ENCODE measurements at regions of chr1 and their contacts with region 1.

Region 1: GRCh38 chr1:59076612-59077011 is 220.3 kb upstream of the FGGY start:
- DNase-seq: no peak
- ATAC-seq: no peak
- H3K4me3 ChIP-seq: no peak overlapping the region
- H3K4me3 Mint-ChIP-seq: no peak overlapping the region
- H3K27ac ChIP-seq: no peak overlapping the region
- H3K27ac Mint-ChIP-seq: no peak overlapping the region
- H3K4me1 ChIP-seq: peaks cover 13% of the 10 kb centered on the region
- H3K4me1 Mint-ChIP-seq: peaks cover 11% of the 10 kb centered on the region
- H3K27me3 ChIP-seq: no peaks in the 10 kb centered on the region
- H3K27me3 Mint-ChIP-seq: no peaks in the 10 kb centered on the region
- CTCF ChIP-seq: peak; percentile 14

Region 2: GRCh38 chr1:58739856-58740466 is 336.7 kb before region 1 on chr1:
- CTCF ChIA-PET with region 1: no interaction called
- POLR2A ChIA-PET with region 1: no interaction called
- intact Hi-C with region 1: loop called in 1 of 2 experiments (anchors 1 kb)
- DNase-seq: peak in 4 of 14 experiments; percentile 42 to 78 (median 75)
- ATAC-seq: no peak
- H3K4me3 ChIP-seq: no peak overlapping the region
- H3K4me3 Mint-ChIP-seq: no peak overlapping the region
- H3K27ac ChIP-seq: no peak overlapping the region
- H3K27ac Mint-ChIP-seq: no peak overlapping the region
- H3K4me1 ChIP-seq: no peaks in the 10 kb centered on the region
- H3K4me1 Mint-ChIP-seq: no peaks in the 10 kb centered on the region
- H3K27me3 ChIP-seq: no peaks in the 10 kb centered on the region
- H3K27me3 Mint-ChIP-seq: no peaks in the 10 kb centered on the region
- CTCF ChIP-seq: peak; percentile 94

Region 3: DNA sequence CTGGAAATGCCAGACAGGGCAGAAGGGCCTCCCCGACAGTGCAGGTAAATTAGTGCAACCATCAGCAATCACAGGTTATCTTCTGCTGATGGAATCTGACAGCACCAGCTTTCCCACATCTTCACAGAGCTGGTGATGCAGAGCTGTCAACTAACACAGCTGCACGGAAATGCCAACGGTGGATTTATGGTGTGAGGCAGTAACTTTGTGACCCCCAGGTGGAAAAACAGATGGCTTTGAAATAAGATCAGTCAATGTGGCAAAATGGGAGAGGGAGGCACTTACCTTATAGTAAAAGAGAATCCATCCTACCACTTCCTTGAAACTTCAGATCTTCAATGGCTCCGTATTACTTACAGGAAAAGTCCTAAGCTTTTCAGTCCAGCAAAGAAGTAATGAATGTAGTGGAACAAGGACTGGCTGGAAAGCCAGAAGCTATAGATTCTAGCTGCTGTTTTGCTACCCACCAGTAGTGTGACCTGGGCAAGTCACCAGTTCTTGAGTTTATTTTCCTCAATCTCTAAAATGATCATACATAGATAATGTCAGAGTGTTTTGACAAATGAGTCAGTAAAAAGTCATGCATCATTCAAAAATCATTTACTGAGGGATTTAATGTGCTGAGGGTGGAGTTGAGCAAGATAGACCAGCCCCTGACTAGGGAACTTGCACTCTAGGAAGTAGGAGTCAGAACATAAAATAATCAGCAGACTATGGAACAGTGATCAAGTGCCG is 47.0 kb before region 1 on chr1:
- CTCF ChIA-PET with region 1: no interaction called
- POLR2A ChIA-PET with region 1: no interaction called
- intact Hi-C with region 1: no loop called
- DNase-seq: no peak
- ATAC-seq: no peak
- H3K4me3 ChIP-seq: no peak overlapping the region
- H3K4me3 Mint-ChIP-seq: no peak overlapping the region
- H3K27ac ChIP-seq: no peak overlapping the region
- H3K27ac Mint-ChIP-seq: no peak overlapping the region
- H3K4me1 ChIP-seq: no peaks in the 10 kb centered on the region
- H3K4me1 Mint-ChIP-seq: no peaks in the 10 kb centered on the region
- H3K27me3 ChIP-seq: peaks cover 0 to 2% of the 10 kb centered on the region in 2 experiments
- H3K27me3 Mint-ChIP-seq: no peaks in the 10 kb centered on the region
- CTCF ChIP-seq: no peak

Region 4: GRCh38 chr1:59146651-59147358 is 70.2 kb after region 1 on chr1:
- CTCF ChIA-PET with region 1: no interaction called
- POLR2A ChIA-PET with region 1: no interaction called
- intact Hi-C with region 1: no loop called
- DNase-seq: peak; percentile 7 to 72 (median 24)
- ATAC-seq: peak; percentile 48
- H3K4me3 ChIP-seq: peak overlapping the region; percentile 62
- H3K4me3 Mint-ChIP-seq: peak overlapping the region; percentile 77
- H3K27ac ChIP-seq: no peak overlapping the region
- H3K27ac Mint-ChIP-seq: no peak overlapping the region
- H3K4me1 ChIP-seq: peaks cover 14% of the 10 kb centered on the region
- H3K4me1 Mint-ChIP-seq: peaks cover 12% of the 10 kb centered on the region
- H3K27me3 ChIP-seq: no peaks in the 10 kb centered on the region
- H3K27me3 Mint-ChIP-seq: peaks cover 13% of the 10 kb centered on the region
- CTCF ChIP-seq: no peak

Region 5: GRCh38 chr1:59173721-59174120 is 97.1 kb after region 1 on chr1:
- CTCF ChIA-PET with region 1: no interaction called
- POLR2A ChIA-PET with region 1: no interaction called
- intact Hi-C with region 1: no loop called
- DNase-seq: peak in 1 of 14 experiments; percentile 11
- ATAC-seq: no peak
- H3K4me3 ChIP-seq: no peak overlapping the region
- H3K4me3 Mint-ChIP-seq: no peak overlapping the region
- H3K27ac ChIP-seq: no peak overlapping the region
- H3K27ac Mint-ChIP-seq: no peak overlapping the region
- H3K4me1 ChIP-seq: no peaks in the 10 kb centered on the region
- H3K4me1 Mint-ChIP-seq: no peaks in the 10 kb centered on the region
- H3K27me3 ChIP-seq: no peaks in the 10 kb centered on the region
- H3K27me3 Mint-ChIP-seq: peaks cover 5% of the 10 kb centered on the region
- CTCF ChIP-seq: no peak

Region 6: GRCh38 chr1:59229138-59229537 is 152.5 kb after region 1 on chr1:
- CTCF ChIA-PET with region 1: no interaction called
- POLR2A ChIA-PET with region 1: no interaction called
- intact Hi-C with region 1: no loop called
- DNase-seq: no peak
- ATAC-seq: no peak
- H3K4me3 ChIP-seq: no peak overlapping the region
- H3K4me3 Mint-ChIP-seq: no peak overlapping the region
- H3K27ac ChIP-seq: no peak overlapping the region
- H3K27ac Mint-ChIP-seq: no peak overlapping the region
- H3K4me1 ChIP-seq: no peaks in the 10 kb centered on the region
- H3K4me1 Mint-ChIP-seq: no peaks in the 10 kb centered on the region
- H3K27me3 ChIP-seq: no peaks in the 10 kb centered on the region
- H3K27me3 Mint-ChIP-seq: no peaks in the 10 kb centered on the region
- CTCF ChIP-seq: no peak

Measured in CD4-positive, alpha-beta T cell (primary cell).